Heart right ventricle (tissue), 16 donors: ENCODE measurements at regions of chr12 and their contacts with region 1.

Region 1: DNA sequence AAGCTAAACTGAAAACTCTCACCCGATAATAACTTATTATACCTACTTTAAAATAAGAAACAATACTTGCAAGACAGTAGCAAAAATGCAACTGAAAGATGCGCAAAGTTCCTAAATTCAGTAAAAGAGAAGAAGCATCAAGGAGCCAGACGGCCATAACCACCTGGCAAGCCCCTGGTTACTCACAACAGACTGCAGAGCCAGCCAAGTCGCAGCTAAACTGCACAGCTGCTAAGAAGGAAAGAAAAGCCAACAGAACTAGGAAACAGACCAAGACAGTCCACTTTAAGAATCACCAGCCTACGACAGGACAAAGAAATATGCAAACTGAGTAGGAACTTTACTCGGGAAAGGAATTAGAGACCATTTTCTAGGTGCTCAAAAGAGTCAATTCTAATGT is 127.9 kb downstream of the TMTC1 start:
- DNase-seq: peak in 1 of 2 donors; percentile 26
- ATAC-seq: peak in 5 of 8 donors; percentile 41 to 64 (median 55)
- H3K4me3 ChIP-seq: no peak overlapping the region
- H3K27ac ChIP-seq: no peak overlapping the region
- H3K4me1 ChIP-seq: peaks cover 0 to 15% (median 6%) of the 10 kb centered on the region in 9 donors
- H3K27me3 ChIP-seq: no peaks in the 10 kb centered on the region
- CTCF ChIP-seq: no peak

Region 2: DNA sequence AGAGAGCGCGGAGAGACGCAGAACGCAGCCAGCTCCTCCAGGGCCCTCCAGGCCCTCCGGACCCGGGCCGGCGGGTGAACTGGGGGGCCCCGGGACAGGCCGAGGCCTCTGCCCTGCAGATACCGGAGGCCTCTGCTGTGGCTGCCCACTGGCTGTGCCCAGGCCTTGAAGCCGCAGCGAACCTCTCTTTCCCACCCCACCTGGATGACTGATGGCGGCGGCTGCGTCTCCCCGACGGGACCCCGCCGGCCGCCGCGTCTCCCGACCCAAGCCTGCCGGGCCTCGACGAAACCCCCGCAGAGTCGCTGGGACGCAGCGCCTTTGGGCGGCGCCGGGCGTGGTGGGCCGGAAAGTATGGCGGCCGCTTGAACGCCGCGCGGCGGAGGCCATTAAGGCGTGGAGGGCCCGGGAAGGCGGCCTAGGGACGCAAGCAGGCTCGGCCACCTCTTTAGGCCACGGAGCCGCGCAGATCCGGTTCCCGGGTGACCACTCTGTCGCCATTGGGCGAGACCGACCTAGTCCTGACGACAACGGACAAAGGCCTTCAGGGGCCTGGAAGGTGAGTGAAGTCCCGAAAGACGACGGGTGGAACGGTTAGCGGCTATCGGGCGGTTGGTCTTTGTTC is 266.5 kb before region 1 on chr12:
- intact Hi-C with region 1: no loop called
- DNase-seq: peak in 1 of 2 donors; percentile 17
- ATAC-seq: peak in 1 of 8 donors; percentile 67
- H3K4me3 ChIP-seq: peak overlapping the region in 3 of 10 donors; percentile 34 to 36 (median 35)
- H3K27ac ChIP-seq: peak overlapping the region in 4 of 10 donors; percentile 41 to 62 (median 53)
- H3K4me1 ChIP-seq: no peaks in the 10 kb centered on the region
- H3K27me3 ChIP-seq: no peaks in the 10 kb centered on the region
- CTCF ChIP-seq: no peak

Region 3: GRCh38 chr12:29725587-29726320 is 69.9 kb after region 1 on chr12:
- intact Hi-C with region 1: no loop called
- DNase-seq: peak; percentile 68 to 81
- ATAC-seq: peak; percentile 81 to 98 (median 94)
- H3K4me3 ChIP-seq: peak overlapping the region in 3 of 10 donors; percentile 1 to 19 (median 3)
- H3K27ac ChIP-seq: peak overlapping the region; percentile 54 to 85 (median 80)
- H3K4me1 ChIP-seq: peaks cover 6 to 55% (median 48%) of the 10 kb centered on the region in 9 donors
- H3K27me3 ChIP-seq: no peaks in the 10 kb centered on the region
- CTCF ChIP-seq: no peak

Region 4: DNA sequence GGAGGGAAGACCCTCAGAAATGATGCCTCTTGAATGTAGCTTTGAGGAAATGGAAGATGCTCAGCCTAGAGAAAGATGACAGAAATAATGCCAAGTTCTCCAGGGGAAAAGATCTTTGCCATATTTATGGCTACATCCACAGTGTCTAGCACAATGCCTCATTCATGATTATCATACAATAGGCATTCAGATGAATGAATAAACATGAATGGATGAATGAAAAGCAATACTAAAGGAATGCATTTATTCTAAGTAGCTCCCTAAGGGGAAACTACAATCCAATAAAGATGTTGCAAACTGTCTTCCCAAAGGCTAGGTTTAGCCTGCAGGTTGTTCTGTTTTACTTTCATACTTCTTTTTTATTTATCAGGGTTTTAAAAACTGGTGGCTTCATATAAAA is 115.9 kb after region 1 on chr12:
- intact Hi-C with region 1: loop called in 1 of 10 experiments (anchors 10 kb)
- DNase-seq: no peak
- ATAC-seq: no peak
- H3K4me3 ChIP-seq: no peak overlapping the region
- H3K27ac ChIP-seq: no peak overlapping the region
- H3K4me1 ChIP-seq: peaks cover 0 to 48% (median 23%) of the 10 kb centered on the region in 9 donors
- H3K27me3 ChIP-seq: no peaks in the 10 kb centered on the region
- CTCF ChIP-seq: no peak